BJ (cell line): ENCODE measurements at regions of chr11 and their contacts with region 1.

Region 1: GRCh38 chr11:34417202-34417601 is 21.5 kb upstream of the CAT start:
- DNase-seq: no peak
- H3K4me3 ChIP-seq: no peak overlapping the region
- H3K27me3 ChIP-seq: peaks cover 3% of the 10 kb centered on the region; the same call in 1 of the 2 replicates
- CTCF ChIP-seq: no peak

Region 2: DNA sequence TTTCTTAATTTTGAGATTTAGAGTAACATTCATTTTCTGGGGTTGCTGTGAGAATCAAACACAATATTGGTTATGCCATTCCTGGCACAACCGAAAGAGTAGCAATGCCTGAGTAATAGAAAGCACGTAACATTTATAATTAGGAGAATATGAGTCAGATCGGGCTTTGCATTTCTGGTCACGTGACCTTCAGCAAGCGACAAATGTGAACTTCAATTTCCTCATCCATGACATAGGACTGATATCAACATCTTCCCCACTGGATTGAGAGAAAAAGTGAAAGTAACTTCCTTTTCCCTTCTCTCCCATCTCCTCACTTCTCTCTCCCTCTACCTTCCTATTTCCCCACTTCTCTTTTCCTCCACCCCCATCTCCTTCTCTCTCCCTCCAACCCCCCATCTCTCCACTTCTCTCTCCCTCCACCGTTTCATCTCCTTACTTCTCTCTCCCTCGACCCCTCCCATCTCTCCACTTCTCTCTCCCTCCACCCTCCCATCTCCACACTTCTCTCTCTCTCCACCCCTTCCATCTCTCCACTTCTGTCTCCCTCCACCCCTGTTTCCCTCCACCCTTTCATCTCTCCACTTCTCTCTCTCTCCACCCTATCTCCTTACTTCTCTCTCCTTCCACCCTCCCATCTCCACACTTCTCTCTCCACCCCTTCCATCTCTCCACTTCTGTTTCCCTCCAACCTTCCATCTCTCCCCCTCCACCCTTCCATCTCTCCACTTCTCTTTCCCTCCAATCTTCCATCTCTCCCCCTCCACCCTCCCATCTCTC is 11.9 kb before region 1 on chr11:
- CTCF ChIA-PET with region 1: interaction called, 19 read pairs
- POLR2A ChIA-PET with region 1: no interaction called
- DNase-seq: no peak
- H3K4me3 ChIP-seq: no peak overlapping the region
- H3K27me3 ChIP-seq: peaks cover 3% of the 10 kb centered on the region
- CTCF ChIP-seq: no peak

Region 3: GRCh38 chr11:34427186-34427805 is 10.1 kb after region 1 on chr11:
- CTCF ChIA-PET with region 1: no interaction called
- POLR2A ChIA-PET with region 1: interaction called, 13 read pairs
- DNase-seq: peak; percentile 83
- H3K4me3 ChIP-seq: no peak overlapping the region
- H3K27me3 ChIP-seq: no peaks in the 10 kb centered on the region
- CTCF ChIP-seq: no peak